ENCODE measurements at regions of chr6 and their contacts with region 1.

Region 1: DNA sequence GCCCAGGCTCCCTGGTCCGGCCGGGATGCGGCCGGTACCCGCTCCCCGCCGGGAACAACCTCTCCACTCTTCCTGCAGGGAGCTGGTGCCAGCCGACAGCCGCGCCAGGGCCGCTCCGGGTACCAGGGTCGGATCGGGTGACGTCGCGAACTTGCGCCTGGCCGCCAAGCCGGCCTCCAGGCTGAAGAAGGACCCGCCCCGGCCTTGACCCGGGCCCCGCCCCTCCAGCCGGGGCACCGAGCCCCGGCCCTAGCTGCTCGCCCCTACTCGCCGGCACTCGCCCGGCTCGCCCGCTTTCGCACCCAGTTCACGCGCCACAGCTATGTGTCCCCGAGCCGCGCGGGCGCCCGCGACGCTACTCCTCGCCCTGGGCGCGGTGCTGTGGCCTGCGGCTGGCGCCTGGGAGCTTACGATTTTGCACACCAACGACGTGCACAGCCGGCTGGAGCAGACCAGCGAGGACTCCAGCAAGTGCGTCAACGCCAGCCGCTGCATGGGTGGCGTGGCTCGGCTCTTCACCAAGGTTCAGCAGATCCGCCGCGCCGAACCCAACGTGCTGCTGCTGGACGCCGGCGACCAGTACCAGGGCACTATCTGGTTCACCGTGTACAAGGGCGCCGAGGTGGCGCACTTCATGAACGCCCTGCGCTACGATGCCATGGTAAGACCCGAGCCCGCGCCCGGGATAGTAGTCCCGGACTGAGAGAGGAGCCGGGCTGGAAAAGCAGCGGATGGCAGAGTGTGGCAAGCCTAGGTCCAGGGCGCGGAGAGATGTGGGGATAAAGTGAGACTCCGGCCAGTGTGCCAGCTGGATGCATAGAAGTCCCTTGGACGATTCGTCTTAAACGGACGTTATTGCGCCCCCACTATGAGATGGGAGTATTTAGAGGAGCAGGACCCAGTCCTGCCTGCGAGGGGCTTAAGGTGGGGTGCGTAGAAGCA is at the start of gene NT5E:
- DNase-seq: peak; percentile 86
- H3K4me3 Mint-ChIP-seq: peak within 1 kb of the TSS; percentile 87
- H3K27ac Mint-ChIP-seq: peak within 1 kb of the TSS; percentile 89
- H3K4me1 Mint-ChIP-seq: peaks cover 65% of the 10 kb centered on the region
- H3K27me3 Mint-ChIP-seq: peaks cover 19% of the 10 kb centered on the region
- total RNA-seq, gene NT5E: 14.8 and 15.2 TPM in 2 replicates

Region 2: GRCh38 chr6:85344996-85345395 is 105.1 kb before region 1 on chr6:
- intact Hi-C with region 1: no loop called
- DNase-seq: no peak
- H3K4me3 Mint-ChIP-seq: no peak overlapping the region
- H3K27ac Mint-ChIP-seq: no peak overlapping the region
- H3K4me1 Mint-ChIP-seq: no peaks in the 10 kb centered on the region
- H3K27me3 Mint-ChIP-seq: peaks cover 33% of the 10 kb centered on the region

Region 3: GRCh38 chr6:85389151-85389797 is 60.8 kb before region 1 on chr6:
- intact Hi-C with region 1: loop called (anchors 1 kb)
- DNase-seq: peak; percentile 56
- H3K4me3 Mint-ChIP-seq: peak overlapping the region; percentile 19
- H3K27ac Mint-ChIP-seq: peak overlapping the region; percentile 60
- H3K4me1 Mint-ChIP-seq: peaks cover 28% of the 10 kb centered on the region
- H3K27me3 Mint-ChIP-seq: no peaks in the 10 kb centered on the region

Region 4: DNA sequence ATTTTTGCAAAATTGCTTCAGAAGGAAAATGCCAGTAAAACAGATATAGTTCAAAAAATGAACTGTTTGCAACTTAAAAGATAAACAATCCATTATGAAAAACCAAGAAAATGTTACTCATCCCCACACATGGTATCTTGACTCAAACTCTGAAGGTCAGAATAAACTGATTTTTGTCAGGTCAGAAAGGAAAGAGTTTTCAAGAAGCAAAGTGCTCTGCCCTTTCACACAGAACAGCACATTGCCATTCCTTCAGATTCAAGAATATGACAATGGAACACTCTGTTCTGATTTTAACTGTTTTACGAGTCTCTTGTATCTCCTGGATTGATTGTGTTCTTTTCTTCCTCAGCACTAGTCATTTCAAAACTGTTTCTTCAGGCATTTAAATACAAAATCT is 34.0 kb before region 1 on chr6:
- intact Hi-C with region 1: loop called (anchors 2 kb)
- DNase-seq: no peak
- H3K4me3 Mint-ChIP-seq: peak overlapping the region; percentile 4
- H3K27ac Mint-ChIP-seq: peak overlapping the region; percentile 58
- H3K4me1 Mint-ChIP-seq: peaks cover 33% of the 10 kb centered on the region
- H3K27me3 Mint-ChIP-seq: peaks cover 6% of the 10 kb centered on the region

Region 5: GRCh38 chr6:85482905-85483700 is 33.0 kb after region 1 on chr6:
- intact Hi-C with region 1: loop called (anchors 1 kb)
- DNase-seq: peak; percentile 96
- H3K4me3 Mint-ChIP-seq: peak overlapping the region; percentile 4
- H3K27ac Mint-ChIP-seq: peak overlapping the region; percentile 9
- H3K4me1 Mint-ChIP-seq: peaks cover 17% of the 10 kb centered on the region
- H3K27me3 Mint-ChIP-seq: no peaks in the 10 kb centered on the region

Region 6: GRCh38 chr6:85642774-85643536 is 192.9 kb after region 1 on chr6 and contains the start of gene SYNCRIP:
- intact Hi-C with region 1: loop called (anchors 1 kb)
- DNase-seq: peak; percentile 100
- H3K4me3 Mint-ChIP-seq: peak within 1 kb of the TSS; percentile 99
- H3K27ac Mint-ChIP-seq: peak within 1 kb of the TSS; percentile 100
- H3K4me1 Mint-ChIP-seq: peaks cover 42% of the 10 kb centered on the region
- H3K27me3 Mint-ChIP-seq: peaks cover 2% of the 10 kb centered on the region
- total RNA-seq, gene SYNCRIP: 228 and 232 TPM in 2 replicates

Measured in activated CD4-positive, alpha-beta T cell treated with anti-CD3 and anti-CD28 coated beads, Interleukin-2, amount 10 ng/mL, durations not matched to agents 24 days and 14 days (primary cell).